Activated CD8-positive, alpha-beta T cell treated with anti-CD3 and anti-CD28 coated beads for 36 hours (primary cell): ENCODE measurements at regions of chr3 and their contacts with region 1.

Region 1: GRCh38 chr3:186790261-186790981 is 7.0 kb downstream of the EIF4A2 start:
- DNase-seq: peak; percentile 21
- ATAC-seq: peak; percentile 29
- H3K4me3 Mint-ChIP-seq: no peak overlapping the region
- H3K27ac Mint-ChIP-seq: peak overlapping the region; percentile 61
- H3K4me1 Mint-ChIP-seq: peaks cover 38% of the 10 kb centered on the region
- H3K27me3 Mint-ChIP-seq: no peaks in the 10 kb centered on the region
- CTCF ChIP-seq: no peak

Region 2: DNA sequence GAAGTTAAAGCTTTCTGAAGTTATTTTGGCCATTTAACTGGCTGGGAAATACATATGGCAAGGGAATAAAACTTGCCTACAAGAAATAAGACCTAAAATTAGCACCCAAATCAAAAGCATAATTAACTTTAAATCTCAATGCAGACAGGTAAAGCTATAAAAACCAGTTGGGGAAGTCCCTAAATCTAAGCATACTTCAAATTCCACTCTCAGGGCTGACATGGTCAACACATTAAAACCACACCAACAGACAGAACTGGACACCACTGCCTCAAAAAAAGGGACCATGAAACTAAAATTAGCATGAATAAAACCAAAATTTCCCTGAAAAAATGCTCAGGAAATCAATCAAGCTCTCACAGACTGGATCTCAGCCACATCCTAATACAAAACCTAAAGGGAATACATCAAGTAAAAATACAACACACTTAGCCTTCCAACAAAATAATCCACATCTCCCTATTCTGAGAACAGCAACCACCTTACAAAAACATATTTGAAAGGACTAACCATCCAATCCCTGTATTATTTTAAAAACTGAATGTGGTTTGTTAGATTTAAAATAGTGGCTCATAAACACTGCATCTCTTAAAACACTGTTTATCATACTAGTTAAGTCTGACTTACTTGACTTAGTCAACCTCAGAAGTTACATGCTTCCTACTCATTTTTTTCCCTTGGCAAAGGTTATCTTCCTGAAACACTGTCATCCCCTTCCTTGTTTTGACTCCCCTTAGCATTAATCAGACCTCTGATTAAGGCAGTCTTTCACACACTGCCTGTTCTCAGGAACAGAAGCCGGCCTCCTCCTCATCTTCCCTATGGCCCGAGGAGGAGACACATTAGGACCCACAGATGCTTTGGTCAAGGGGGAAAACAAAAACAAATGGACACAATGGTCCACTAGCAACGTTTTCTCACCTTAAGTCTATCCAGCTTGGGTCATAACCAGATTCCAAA is 860.9 kb before region 1 on chr3:
- CTCF ChIA-PET with region 1: no interaction called
- POLR2A ChIA-PET with region 1: interaction called, 46 read pairs
- intact Hi-C with region 1: no loop called
- DNase-seq: no peak
- ATAC-seq: no peak
- H3K4me3 Mint-ChIP-seq: peak overlapping the region; percentile 100
- H3K27ac Mint-ChIP-seq: peak overlapping the region; percentile 66
- H3K4me1 Mint-ChIP-seq: peaks cover 85% of the 10 kb centered on the region
- H3K27me3 Mint-ChIP-seq: no peaks in the 10 kb centered on the region
- CTCF ChIP-seq: no peak

Region 3: DNA sequence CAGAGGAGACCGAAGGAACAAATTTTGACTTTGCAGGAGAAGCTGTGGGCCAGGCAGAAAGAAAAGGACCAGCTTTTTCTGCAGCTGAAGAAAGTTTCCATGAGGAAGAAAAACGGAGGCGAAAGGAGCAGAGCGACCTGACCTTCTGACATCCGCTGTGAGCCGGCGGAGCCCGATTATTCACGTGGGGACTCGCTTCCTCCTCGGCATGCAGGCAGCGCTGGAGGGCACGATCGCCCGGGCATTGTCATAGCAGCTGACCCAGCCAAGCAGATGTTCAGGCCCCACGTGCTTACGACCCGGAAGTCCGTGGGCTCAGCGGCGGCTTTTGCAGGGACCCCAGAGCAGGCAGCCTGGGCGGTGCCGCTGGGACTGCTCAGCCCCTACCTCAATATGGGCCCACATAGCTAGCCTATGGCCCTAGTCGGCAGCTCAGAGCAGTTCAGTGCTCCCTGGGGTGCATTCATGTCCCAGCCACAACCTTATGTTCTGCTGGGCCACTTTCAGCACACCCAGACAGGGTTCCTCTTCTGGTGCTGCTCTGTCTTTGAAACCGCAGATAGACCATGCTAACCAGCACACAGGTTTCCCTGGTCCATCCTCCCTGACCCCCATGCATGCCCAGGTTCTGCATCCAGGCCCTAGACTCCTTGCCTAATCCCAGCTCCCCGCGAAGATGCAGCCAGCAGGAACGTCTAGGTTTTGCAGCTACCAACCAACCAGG is 17.6 kb before region 1 on chr3:
- CTCF ChIA-PET with region 1: no interaction called
- POLR2A ChIA-PET with region 1: interaction called, 206 read pairs
- intact Hi-C with region 1: no loop called
- DNase-seq: peak; percentile 91
- ATAC-seq: peak; percentile 94
- H3K4me3 Mint-ChIP-seq: peak overlapping the region; percentile 84
- H3K27ac Mint-ChIP-seq: peak overlapping the region; percentile 95
- H3K4me1 Mint-ChIP-seq: peaks cover 8% of the 10 kb centered on the region
- H3K27me3 Mint-ChIP-seq: no peaks in the 10 kb centered on the region
- CTCF ChIP-seq: no peak

Region 4: DNA sequence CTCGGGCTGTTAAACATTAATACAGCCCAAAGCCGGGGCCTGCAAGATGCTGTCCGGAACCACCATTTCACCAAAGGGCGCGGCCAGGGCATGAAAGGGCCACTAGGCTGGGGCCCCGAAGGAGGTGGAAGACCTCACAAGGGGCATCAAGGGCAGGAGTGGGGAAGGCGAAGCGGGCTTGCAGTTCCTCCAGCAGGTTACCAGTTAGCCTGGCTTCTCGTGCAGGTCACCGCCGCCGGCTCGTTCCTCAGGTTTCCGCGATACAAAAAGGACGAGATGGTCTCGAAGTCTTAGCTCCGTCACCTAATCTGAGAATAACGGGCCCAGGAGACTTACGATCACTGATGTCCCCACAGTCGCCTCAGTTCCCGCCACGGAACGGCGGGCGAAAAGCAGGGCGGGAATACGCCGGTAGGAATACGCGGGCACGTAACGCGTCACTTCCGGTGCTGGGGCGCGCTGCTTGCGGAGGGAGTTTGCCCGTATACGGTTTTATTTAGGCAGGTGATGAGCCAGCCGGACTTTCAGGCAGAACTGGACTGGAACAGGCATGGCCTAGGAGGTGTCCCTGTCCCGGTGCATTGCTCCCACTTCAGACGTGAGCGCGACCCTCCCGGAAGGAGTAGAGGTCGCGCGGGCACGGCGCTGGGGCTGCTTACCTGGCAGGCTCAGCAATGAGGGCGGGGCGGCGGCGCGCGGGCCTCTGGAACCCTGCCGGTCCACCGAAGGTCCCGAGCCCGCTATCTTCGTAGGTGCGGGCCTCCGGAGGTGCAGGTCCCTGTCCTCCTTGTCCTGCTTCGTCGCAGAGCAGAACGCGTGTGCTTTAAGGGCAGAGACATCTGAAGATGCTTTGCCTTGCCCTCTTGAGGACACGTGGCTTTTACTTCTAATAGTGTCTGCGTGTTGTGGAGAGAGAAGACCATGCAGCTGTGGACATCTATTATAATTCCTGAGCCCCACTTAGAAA is 16.0 kb after region 1 on chr3 and contains the start of gene RFC4:
- CTCF ChIA-PET with region 1: interaction called, 8 read pairs
- POLR2A ChIA-PET with region 1: interaction called, 178 read pairs
- intact Hi-C with region 1: loop called (anchors 2 kb)
- DNase-seq: peak; percentile 88
- ATAC-seq: peak; percentile 82
- H3K4me3 Mint-ChIP-seq: peak within 1 kb of the TSS; percentile 95
- H3K27ac Mint-ChIP-seq: peak within 1 kb of the TSS; percentile 96
- H3K4me1 Mint-ChIP-seq: peaks cover 25% of the 10 kb centered on the region
- H3K27me3 Mint-ChIP-seq: no peaks in the 10 kb centered on the region
- CTCF ChIP-seq: no peak
- total RNA-seq, gene RFC4: 110 to 125 TPM

Region 5: DNA sequence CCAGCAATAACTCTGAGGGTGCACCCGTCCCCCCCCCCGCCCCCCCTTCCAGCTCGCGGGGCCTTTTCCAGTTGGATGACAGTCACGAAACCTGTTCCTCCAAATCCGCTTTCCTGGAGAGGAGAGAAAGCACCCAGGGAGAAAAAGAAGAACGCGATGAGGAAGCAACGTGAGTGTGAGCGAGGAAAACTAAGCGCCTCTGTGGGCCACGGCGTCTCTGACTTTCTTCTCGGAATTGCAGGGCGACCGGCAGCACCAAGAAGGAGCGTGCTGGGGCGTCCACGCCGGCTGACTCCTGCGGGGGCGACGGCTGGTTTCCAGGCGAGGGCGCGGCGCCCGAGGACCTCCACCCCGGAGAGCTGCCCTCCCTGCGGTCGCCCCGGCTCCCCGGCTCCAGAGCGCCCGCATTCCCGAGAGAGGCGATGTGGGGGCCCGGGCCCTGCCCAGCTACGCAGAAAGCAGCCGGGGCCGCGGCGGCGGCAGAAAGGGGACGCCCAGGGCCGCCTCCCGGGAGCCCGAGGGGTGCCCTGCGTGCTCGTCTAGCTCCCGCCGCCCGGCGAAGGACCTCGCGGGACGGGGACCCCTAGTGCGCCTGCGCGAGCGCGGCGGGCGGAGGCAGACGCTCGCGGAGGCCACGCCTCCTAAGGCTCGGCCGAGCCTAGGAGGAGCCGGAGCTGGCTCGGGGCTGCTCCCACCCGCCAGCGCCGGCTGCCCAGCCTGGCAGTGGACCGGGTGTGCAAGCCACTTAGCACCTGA is 36.7 kb after region 1 on chr3:
- CTCF ChIA-PET with region 1: interaction called, 6 read pairs
- POLR2A ChIA-PET with region 1: interaction called, 81 read pairs
- intact Hi-C with region 1: no loop called
- DNase-seq: peak; percentile 83
- ATAC-seq: peak; percentile 86
- H3K4me3 Mint-ChIP-seq: peak overlapping the region; percentile 81
- H3K27ac Mint-ChIP-seq: peak overlapping the region; percentile 71
- H3K4me1 Mint-ChIP-seq: peaks cover 28% of the 10 kb centered on the region
- H3K27me3 Mint-ChIP-seq: peaks cover 36% of the 10 kb centered on the region
- CTCF ChIP-seq: no peak